ENCODE measurements at regions of chr5 and their contacts with region 1.

Region 1: GRCh38 chr5:7208938-7209337 is 187.0 kb upstream of the ADCY2 start:
- DNase-seq: peak; percentile 13
- H3K4me3 ChIP-seq: no peak overlapping the region
- H3K27ac ChIP-seq: peak overlapping the region in 1 of 2 donors; percentile 28
- H3K4me1 ChIP-seq: no peaks in the 10 kb centered on the region
- H3K27me3 ChIP-seq: no peaks in the 10 kb centered on the region
- CTCF ChIP-seq: no peak
- POLR2A ChIP-seq: no peak

Region 2: GRCh38 chr5:7087719-7088297 is 121.1 kb before region 1 on chr5:
- intact Hi-C with region 1: loop called (anchors 10 kb)
- DNase-seq: no peak
- H3K4me3 ChIP-seq: no peak overlapping the region
- H3K27ac ChIP-seq: no peak overlapping the region
- H3K4me1 ChIP-seq: no peaks in the 10 kb centered on the region
- H3K27me3 ChIP-seq: no peaks in the 10 kb centered on the region
- CTCF ChIP-seq: no peak
- POLR2A ChIP-seq: no peak